H1 (cell line): ENCODE measurements at regions of chr14 and their contacts with region 1.

Region 1: DNA sequence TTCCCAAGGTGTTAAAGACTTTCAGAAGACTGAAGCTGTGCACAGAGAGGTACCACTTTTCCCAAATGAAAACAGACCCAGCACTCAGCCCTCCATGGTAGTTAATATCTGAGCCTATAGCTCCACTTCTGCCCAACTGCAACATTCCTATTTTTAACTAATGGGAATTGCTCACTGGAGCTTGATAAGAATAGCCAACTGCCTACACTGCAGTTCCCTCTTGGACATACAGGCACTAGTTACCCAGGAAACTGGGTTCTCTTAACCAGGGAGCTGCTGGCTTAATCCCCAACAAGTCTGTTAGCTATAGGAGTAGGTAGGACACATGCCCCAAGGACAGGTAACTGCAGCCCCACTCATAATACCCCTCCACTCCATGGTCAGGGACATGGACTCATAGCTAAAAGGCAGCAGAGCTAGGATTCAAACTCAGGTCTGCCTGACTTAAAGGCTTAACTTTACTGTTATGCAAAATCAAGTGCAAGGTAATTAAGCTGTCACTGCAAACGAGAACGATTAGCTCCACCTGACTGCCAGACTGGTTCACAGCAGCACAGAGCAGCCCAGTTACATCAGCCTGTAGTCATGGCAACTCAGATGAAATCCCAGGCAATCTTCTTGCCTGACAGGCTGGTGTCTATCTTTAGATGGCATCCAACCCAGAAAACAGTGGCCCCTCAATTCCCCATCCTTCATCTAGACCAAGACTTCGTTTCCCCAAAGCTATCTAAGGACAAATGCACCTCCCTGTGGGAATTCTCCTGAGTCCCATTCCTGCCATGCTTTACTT is 77.1 kb upstream of the ACTN1 start:
- DNase-seq: no peak
- H3K4me3 ChIP-seq: no peak overlapping the region
- H3K27ac ChIP-seq: no peak overlapping the region
- H3K4me1 ChIP-seq: peaks cover 0 to 14% (median 6%) of the 10 kb centered on the region in 4 experiments; a peak in 6 of 7 replicates
- H3K27me3 ChIP-seq: no peaks in the 10 kb centered on the region
- CTCF ChIP-seq: peak; percentile 51 to 62 (median 53)
- EP300 ChIP-seq: no peak
- POLR2A ChIP-seq: no peak
- RAD21 ChIP-seq: peak; percentile 58 to 69

Region 2: DNA sequence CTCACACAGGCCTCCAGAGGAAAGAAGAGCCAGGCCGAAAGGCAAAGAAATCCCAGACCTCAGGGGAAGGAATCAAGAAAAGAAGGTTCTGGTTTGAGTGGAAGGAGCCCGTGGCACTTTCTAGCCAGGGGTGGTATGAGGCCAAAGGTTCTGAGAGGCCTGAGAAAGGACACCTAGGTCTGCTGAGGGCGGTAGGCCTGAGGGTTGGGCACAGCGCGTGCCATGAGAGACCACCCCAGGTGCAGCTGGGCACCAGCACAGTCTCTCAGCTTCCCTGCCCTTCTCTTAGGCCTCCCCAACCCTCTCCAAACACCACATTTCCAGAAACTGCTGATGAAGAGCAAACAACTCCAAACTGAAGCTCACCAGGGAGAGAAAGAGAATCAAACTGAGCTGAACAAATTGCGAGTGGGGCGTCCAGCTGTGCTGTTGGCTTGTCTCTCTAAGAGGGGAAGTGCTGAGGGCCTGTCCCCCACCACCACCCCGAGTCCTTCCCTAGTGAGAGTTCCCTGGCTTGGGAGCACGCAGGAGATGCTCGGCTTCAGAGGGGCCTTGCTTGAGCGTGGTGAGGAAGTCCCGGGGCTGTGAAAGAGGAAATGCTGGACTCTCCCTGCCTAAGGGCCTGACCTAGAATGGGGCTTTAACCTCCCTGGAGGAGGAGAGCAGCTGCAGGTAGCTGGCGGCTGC is 448.2 kb before region 1 on chr14:
- CTCF ChIA-PET with region 1: no interaction called
- POLR2A ChIA-PET with region 1: no interaction called
- DNase-seq: no peak
- H3K4me3 ChIP-seq: no peak overlapping the region
- H3K27ac ChIP-seq: no peak overlapping the region
- H3K4me1 ChIP-seq: peaks cover 0 to 17% (median 8%) of the 10 kb centered on the region in 4 experiments; a peak in 5 of 7 replicates
- H3K27me3 ChIP-seq: no peaks in the 10 kb centered on the region; a peak in 1 of 7 replicates
- CTCF ChIP-seq: no peak
- EP300 ChIP-seq: no peak
- POLR2A ChIP-seq: no peak
- RAD21 ChIP-seq: no peak

Region 3: GRCh38 chr14:69038455-69039287 is 17.5 kb before region 1 on chr14:
- CTCF ChIA-PET with region 1: interaction called, 17 read pairs
- POLR2A ChIA-PET with region 1: interaction called, 4 read pairs
- DNase-seq: no peak
- H3K4me3 ChIP-seq: no peak overlapping the region
- H3K27ac ChIP-seq: no peak overlapping the region
- H3K4me1 ChIP-seq: peaks cover 3 to 20% (median 12%) of the 10 kb centered on the region in 4 experiments
- H3K27me3 ChIP-seq: no peaks in the 10 kb centered on the region
- CTCF ChIP-seq: no peak
- EP300 ChIP-seq: no peak
- POLR2A ChIP-seq: no peak
- RAD21 ChIP-seq: no peak

Region 4: GRCh38 chr14:69043596-69044260 is 12.5 kb before region 1 on chr14:
- CTCF ChIA-PET with region 1: interaction called, 17 read pairs
- POLR2A ChIA-PET with region 1: interaction called, 3 read pairs
- DNase-seq: no peak
- H3K4me3 ChIP-seq: no peak overlapping the region
- H3K27ac ChIP-seq: no peak overlapping the region
- H3K4me1 ChIP-seq: peaks cover 13 to 29% (median 15%) of the 10 kb centered on the region in 4 experiments
- H3K27me3 ChIP-seq: no peaks in the 10 kb centered on the region; a peak in 1 of 7 replicates
- CTCF ChIP-seq: no peak
- EP300 ChIP-seq: no peak
- POLR2A ChIP-seq: no peak
- RAD21 ChIP-seq: no peak

Region 5: GRCh38 chr14:69066396-69067171 is 10.4 kb after region 1 on chr14:
- CTCF ChIA-PET with region 1: interaction called, 10 read pairs
- POLR2A ChIA-PET with region 1: no interaction called
- DNase-seq: no peak
- H3K4me3 ChIP-seq: no peak overlapping the region
- H3K27ac ChIP-seq: no peak overlapping the region
- H3K4me1 ChIP-seq: no peaks in the 10 kb centered on the region
- H3K27me3 ChIP-seq: no peaks in the 10 kb centered on the region
- CTCF ChIP-seq: no peak
- EP300 ChIP-seq: no peak
- POLR2A ChIP-seq: no peak
- RAD21 ChIP-seq: no peak

Region 6: DNA sequence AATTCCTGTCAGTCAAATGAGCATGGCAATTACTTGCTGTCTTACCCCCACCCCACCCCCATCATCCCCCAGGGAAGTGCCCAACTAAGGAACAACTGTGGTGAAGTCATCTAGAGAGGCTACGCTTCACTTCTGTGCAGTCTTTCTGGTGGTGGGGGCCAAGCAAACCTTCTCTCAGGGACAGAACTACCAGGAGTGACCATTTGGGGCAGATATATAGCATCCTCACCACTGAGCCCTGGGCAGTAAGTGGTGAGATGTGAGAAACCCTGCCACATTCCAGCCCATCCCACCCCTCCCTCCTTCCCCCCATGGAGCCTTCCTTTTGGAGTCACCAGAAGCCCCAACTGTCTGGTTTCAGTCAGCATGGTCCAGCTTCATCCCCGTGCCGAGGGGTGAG is 201.3 kb after region 1 on chr14:
- CTCF ChIA-PET with region 1: no interaction called
- POLR2A ChIA-PET with region 1: no interaction called
- DNase-seq: no peak
- H3K4me3 ChIP-seq: no peak overlapping the region
- H3K27ac ChIP-seq: no peak overlapping the region
- H3K4me1 ChIP-seq: peaks cover 5 to 13% (median 9%) of the 10 kb centered on the region in 4 experiments
- H3K27me3 ChIP-seq: peaks cover 13 to 56% (median 43%) of the 10 kb centered on the region in 4 experiments
- CTCF ChIP-seq: peak in 2 of 3 experiments; percentile 8 to 18; a peak in 2 of 4 replicates
- EP300 ChIP-seq: no peak
- POLR2A ChIP-seq: no peak
- RAD21 ChIP-seq: no peak